Sigmoid colon (tissue), 7 donors: ENCODE measurements at regions of chr1 and their contacts with region 1.

Region 1: DNA sequence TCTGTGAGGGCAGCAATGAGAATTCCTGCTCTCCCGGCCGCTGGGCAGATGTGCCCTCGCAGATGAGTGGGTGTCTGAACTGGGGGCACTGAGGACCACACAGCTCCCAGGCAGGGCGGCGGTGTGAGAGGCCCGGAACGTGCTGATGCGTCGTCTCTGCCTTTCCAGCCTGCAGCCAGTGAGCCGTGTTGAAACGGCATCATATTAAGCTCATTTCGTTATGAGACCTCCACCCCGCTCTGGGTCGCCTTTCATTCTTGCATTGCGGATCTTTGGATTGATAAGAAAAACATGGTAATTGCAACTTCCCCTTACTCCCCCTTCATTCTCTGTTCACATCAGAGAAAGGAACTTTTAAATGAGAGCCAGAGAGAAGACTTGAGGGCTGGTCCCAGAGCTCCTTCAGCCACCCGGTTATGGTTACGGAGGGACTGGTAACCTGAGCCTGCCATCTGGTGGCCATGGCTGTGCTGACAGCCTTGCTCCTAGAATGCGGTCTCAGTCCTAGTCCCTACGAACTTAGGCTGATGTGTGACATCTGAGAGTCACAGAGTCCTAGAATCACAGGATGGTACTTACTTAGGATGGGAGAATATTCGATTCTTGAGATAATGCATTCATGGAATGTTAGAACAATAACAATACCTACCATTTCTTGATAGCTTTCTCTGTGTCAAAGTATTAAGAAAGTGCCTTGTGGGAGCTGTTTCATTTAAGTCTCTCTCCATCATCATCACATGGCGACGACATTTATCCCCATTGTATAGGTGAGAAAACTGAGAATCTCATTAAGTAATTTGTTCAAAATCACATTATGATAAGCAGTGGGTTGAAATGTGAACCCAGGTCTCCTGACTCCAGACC is 271.0 kb downstream of the TRABD2B start:
- DNase-seq: peak; percentile 79
- H3K4me3 ChIP-seq: peak overlapping the region in 2 of 4 donors; percentile 3 to 13
- H3K27ac ChIP-seq: no peak overlapping the region
- H3K4me1 ChIP-seq: peaks cover 0 to 18% (median 14%) of the 10 kb centered on the region in 4 donors
- H3K27me3 ChIP-seq: peaks cover 14 to 51% (median 35%) of the 10 kb centered on the region in 3 donors
- CTCF ChIP-seq: peak; percentile 68 to 88 (median 80)
- EP300 ChIP-seq: no peak
- POLR2A ChIP-seq: no peak

Region 2: DNA sequence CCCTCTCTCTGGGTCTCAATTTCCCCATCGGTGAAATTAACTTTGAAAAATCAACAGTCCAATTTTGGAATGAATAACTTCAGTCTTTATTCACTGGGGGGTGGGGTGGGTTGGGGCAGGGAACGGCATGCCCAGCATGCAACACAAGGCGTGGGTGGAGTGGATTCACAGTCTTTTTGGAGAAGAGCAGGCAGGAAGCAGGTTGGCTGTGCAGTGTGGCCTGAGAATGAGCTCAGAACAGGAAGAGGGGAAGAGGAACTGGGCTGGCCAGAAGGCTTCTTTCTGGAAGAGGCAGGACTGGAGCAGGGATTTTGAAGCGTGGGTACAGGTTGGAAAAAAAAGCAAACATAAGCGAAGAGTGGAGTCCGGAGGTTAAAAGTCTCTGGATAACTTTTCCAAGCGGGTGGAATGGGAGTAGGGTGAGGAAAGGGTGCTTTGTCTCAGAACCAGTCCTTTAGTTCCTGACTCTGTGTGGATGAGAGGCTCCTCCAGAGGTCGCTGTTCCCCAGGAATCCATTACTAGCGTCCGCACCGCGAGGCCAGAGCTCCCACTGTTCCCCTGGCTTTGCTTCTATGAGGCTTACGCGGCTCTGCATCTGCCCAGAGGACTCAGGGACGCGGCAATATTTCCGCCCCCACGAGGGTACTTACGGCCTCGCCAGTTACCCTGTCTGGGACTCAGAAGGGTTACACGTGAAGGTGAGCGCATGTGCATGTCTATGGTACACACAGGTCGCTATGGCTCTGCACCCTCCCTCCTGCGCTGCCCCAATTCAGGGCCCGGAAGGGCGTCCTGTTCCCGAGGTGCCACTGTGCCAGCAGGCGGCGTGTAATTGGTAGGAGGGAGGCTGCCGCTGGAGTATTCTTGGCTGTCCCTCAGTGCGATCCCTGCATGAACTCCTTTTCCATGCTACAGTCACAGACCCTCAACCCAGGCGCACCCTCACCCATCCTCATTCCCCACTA is 293.9 kb before region 1 on chr1:
- intact Hi-C with region 1: loop called (anchors 5 kb)
- DNase-seq: peak; percentile 79
- H3K4me3 ChIP-seq: peak overlapping the region in 1 of 4 donors; percentile 1
- H3K27ac ChIP-seq: no peak overlapping the region
- H3K4me1 ChIP-seq: peaks cover 0 to 49% (median 43%) of the 10 kb centered on the region in 4 donors
- H3K27me3 ChIP-seq: peaks cover 55 to 100% (median 77%) of the 10 kb centered on the region in 3 donors
- CTCF ChIP-seq: peak in 3 of 4 experiments; percentile 43 to 64 (median 58)
- EP300 ChIP-seq: no peak
- POLR2A ChIP-seq: no peak

Region 3: DNA sequence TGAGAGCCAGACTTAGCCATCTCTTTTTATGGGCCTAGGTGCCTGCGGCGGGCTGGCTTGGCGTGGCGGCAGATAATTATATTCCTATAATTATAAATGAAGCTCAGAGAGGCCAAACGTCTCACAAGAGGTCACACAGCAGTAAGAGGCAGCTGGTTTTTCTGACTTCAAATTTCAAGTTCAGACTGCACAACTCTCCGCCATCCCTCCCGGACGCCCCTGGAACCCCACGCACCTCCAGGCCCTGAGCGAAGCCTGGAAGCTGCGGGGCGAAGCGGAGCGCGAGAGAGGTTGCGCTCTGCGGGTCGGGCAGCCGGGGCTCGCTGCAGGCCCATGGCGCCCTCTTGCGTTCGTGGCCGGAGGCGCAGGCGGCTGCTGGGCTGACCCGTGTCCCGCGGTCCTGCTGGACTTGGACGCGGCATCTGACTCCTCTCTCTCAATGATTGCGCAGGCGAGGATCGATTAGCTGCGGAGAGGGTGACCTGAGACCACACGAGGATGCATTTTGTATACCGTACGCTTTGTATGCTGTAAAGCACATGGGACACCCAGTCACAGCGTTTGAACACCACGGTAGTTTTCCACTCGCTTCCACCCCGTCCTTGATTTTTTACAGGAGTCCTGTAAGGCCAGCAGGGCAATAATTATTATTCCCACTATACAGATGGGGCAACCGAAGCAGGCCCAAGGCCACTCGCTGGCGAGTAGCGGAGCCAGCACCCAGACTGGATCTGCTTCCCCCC is 15.7 kb before region 1 on chr1:
- intact Hi-C with region 1: no loop called
- DNase-seq: peak; percentile 84
- H3K4me3 ChIP-seq: peak overlapping the region in 3 of 4 donors; percentile 36 to 47 (median 45)
- H3K27ac ChIP-seq: no peak overlapping the region
- H3K4me1 ChIP-seq: peaks cover 0 to 28% (median 26%) of the 10 kb centered on the region in 4 donors
- H3K27me3 ChIP-seq: peaks cover 31 to 89% (median 40%) of the 10 kb centered on the region in 3 donors
- CTCF ChIP-seq: peak; percentile 80 to 100 (median 91)
- EP300 ChIP-seq: no peak
- POLR2A ChIP-seq: no peak